Endothelial cell of umbilical vein (primary cell): ENCODE measurements at regions of chr1 and their contacts with region 1.

Region 1: DNA sequence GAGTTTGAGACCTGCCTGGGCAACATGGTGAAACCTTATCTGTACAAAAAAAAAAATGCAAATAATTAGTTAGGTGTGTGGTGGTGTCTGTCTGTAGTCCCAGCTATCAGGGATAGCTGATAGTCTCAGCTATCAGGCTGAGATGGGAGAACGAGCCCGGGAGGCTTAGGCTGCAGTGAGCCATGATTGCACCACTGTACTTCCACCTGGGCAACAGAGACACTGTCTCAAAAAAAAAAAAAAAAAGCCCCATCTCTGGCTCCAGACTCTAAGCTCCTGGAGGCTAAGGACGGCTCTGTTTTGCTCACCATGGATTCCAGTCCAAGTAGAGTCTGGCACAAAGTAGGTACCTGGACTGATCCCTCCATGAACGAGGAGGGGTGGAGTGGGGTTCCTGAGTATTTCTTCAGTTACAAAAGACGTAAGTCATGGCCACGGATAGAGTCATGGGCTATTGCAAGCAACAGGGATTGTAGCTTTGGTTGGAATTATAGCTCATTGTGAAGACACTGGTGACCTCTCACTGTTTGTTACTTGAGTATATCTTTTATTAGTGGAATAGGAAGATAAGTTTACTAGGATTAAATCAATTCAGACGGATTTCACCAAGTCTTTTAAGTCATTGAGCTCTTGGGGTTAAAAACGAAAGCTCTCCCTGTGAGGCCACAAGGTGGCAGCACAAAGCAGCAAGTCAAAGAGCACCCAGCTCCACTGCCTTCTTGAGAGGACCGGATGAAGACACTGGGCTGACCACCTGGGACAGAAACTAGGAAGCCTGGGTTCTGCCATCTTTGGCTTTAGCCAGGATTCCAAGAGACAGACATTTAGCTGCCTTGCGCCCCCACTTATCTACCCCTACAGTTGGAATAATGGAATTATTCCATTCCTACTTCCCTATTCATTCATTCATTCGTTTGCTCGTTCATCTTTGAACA is 35.6 kb upstream of the TMEM61 start:
- DNase-seq: peak; percentile 79
- H3K4me3 ChIP-seq: no peak overlapping the region
- H3K27ac ChIP-seq: no peak overlapping the region
- H3K4me1 ChIP-seq: peaks cover 4% of the 10 kb centered on the region
- H3K27me3 ChIP-seq: peaks cover 0 to 4% of the 10 kb centered on the region in 2 experiments
- CTCF ChIP-seq: peak; percentile 81 to 86
- POLR2A ChIP-seq: no peak

Region 2: DNA sequence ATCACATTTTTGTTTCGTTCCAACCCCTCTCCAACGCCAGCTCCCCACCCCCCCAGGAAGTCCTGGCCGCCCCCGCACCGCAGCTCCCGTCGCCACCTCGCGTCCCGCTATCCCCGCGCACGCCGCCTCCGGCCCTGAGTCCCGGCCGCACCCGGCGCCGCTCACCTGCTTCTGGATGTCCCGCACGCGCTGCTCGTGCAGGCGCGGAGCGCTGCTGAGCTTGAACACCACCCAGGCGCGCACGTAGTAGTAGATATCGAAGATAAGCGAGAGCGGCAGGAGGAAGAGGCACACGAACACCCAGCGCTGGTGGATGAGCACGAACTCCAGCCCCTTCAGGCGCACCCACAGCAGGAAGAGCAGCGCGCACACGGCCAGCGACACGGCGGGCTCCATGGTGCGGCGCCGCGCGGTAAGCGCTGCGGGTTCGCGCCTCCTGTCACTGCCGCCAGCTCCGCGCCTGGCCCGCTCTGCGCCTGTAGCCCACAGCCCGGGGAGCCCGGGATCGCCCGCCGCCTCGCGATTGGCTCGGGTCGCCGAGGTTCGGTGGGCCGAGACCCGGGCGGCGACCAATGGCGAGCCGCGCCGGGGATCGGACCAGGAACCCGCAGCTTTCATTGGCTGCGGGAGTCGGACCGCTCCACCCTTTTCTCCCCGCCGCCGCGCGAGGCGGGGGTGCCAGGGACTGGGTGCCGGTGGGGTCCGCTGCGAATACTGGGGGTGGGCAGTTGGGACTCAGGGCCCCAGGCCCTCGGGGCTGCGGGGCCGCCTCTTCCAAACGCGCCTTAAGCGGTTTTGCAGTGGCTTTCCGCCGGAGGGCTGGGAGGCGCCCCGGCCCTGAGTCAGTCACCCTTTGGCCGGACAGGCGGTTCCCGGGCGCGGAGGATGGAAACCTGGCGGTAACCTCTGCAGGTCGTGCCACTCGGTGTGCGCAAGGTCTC is 57.9 kb before region 1 on chr1 and contains the start of gene DHCR24:
- CTCF ChIA-PET with region 1: interaction called, 29 read pairs
- POLR2A ChIA-PET with region 1: no interaction called
- dilution Hi-C with region 1: no loop called
- intact Hi-C with region 1: loop called (anchors 2 kb)
- DNase-seq: peak; percentile 85
- H3K4me3 ChIP-seq: peak within 1 kb of the TSS; percentile 52 to 78 (median 56)
- H3K27ac ChIP-seq: peak within 1 kb of the TSS; percentile 25
- H3K4me1 ChIP-seq: peaks cover 32% of the 10 kb centered on the region
- H3K27me3 ChIP-seq: no peaks in the 10 kb centered on the region
- CTCF ChIP-seq: no peak
- POLR2A ChIP-seq: peak; percentile 77
- total RNA-seq, gene DHCR24: 223 and 229 TPM in 2 replicates

Region 3: DNA sequence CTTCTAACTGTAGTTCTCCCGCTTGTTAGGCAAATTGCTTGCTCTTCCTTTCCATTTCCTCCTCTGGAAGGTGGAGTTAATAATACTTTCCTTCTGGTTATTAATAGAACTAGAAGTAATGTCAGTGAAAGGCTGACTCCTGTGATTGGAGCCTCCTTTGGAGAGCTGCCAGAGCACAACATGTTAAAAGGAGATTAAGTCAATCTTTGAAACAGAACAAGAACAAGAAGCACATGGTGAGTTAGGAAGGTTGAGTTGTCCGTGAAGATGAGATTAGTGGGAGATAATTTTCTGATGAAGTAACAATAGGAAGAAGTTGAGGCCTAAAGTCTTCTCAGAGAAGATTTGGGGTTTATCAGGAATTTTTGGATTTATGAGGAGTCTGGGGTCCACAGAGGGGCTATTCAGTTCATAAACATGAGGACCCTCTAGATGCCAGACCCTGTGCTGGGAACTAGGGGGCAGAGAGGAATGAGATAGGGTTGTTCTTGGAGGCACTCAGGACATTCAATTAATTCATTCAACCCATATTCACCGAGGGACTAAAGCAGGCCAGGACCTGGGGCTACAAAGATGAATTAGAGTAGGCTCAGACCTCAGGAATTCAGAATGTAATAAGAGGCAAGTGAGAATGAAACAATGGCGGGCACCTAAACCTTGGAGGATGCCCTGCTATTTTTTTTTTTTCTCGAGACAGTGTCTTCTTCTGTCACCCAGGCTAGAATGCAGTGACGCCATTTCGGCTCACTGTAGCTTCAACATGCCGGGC is 17.2 kb before region 1 on chr1:
- CTCF ChIA-PET with region 1: interaction called, 14 read pairs
- POLR2A ChIA-PET with region 1: no interaction called
- dilution Hi-C with region 1: no loop called
- intact Hi-C with region 1: no loop called
- DNase-seq: peak; percentile 33
- H3K4me3 ChIP-seq: no peak overlapping the region
- H3K27ac ChIP-seq: no peak overlapping the region
- H3K4me1 ChIP-seq: no peaks in the 10 kb centered on the region
- H3K27me3 ChIP-seq: peaks cover 4 to 13% of the 10 kb centered on the region in 2 experiments
- CTCF ChIP-seq: no peak
- POLR2A ChIP-seq: no peak

Region 4: DNA sequence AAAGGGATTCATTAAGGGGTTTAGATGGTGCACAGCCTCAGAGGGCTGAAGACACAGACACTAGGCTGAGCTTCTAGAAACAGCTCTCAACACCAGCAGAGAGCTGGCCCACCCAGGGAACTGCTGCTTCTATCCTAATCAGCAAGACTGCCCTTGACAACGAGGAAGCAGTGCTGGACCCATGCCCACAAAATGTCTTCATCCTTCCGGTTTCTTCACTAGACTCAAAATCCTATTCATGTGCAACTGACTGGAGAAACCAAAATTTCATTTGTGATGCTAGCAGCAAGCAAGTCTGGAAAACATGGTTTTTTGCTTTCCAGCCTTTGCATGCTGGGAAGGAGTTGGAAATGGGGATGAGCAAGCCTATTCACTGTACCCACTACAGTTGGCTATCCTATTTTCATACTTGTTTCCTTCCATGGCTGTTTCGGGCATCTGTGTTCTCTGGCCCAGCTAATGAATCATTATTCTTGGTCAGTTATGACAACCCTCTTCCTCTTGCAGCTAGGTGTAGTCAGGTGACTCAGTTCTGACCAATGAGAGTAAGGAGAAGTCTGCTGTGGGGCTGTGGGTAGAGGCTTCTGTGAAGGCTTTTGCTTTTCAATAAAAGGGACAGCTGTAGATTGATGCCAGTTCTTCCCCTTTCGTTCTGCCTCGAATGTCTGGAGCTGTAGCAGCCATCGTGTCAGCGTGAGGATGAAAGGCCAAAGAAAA is 20.9 kb after region 1 on chr1:
- CTCF ChIA-PET with region 1: interaction called, 31 read pairs
- POLR2A ChIA-PET with region 1: no interaction called
- dilution Hi-C with region 1: no loop called
- intact Hi-C with region 1: no loop called
- DNase-seq: peak; percentile 18
- H3K4me3 ChIP-seq: no peak overlapping the region
- H3K27ac ChIP-seq: no peak overlapping the region
- H3K4me1 ChIP-seq: peaks cover 8% of the 10 kb centered on the region
- H3K27me3 ChIP-seq: no peaks in the 10 kb centered on the region
- CTCF ChIP-seq: no peak
- POLR2A ChIP-seq: no peak

Region 5: GRCh38 chr1:54996359-54996868 is 51.5 kb after region 1 on chr1:
- CTCF ChIA-PET with region 1: interaction called, 918 read pairs
- POLR2A ChIA-PET with region 1: no interaction called
- dilution Hi-C with region 1: no loop called
- intact Hi-C with region 1: loop called (anchors 1 kb)
- DNase-seq: peak; percentile 59
- H3K4me3 ChIP-seq: no peak overlapping the region
- H3K27ac ChIP-seq: no peak overlapping the region
- H3K4me1 ChIP-seq: peaks cover 3% of the 10 kb centered on the region
- H3K27me3 ChIP-seq: peaks cover 12 to 14% of the 10 kb centered on the region in 2 experiments
- CTCF ChIP-seq: peak; percentile 77 to 87
- POLR2A ChIP-seq: no peak

Region 6: DNA sequence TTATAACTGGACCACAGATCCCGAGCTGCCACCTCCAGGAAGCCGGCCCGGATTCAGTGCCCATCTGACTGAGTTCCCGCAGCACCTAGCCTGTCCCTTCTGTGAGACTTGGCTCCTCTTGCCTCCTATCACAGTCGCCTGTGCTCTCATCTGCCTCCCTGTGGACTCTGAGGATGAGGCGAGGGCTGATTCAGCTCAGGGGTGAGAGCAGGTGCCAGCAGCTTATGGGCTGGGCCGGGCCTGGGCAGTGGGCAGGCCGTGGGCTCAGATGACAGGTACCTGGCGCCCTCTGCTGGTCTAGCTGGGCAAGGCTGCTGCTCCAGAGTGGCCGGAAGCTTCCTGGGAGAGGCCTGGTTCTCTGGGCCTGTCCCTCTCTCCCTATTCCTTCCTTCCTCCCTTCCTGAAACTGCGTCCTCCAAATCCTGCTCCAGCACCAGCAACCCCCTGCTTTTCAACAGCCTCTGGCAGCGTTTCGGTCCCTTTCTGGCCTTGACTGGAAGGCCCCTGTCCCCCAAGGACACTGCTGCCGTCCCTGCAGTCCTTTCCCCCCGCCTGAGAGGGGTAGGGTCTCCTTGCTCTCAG is 77.2 kb after region 1 on chr1:
- CTCF ChIA-PET with region 1: interaction called, 587 read pairs
- POLR2A ChIA-PET with region 1: interaction called, 5 read pairs
- dilution Hi-C with region 1: no loop called
- intact Hi-C with region 1: loop called (anchors 1 kb)
- DNase-seq: peak; percentile 72
- H3K4me3 ChIP-seq: no peak overlapping the region
- H3K27ac ChIP-seq: no peak overlapping the region
- H3K4me1 ChIP-seq: no peaks in the 10 kb centered on the region
- H3K27me3 ChIP-seq: peaks cover 0 to 2% of the 10 kb centered on the region in 2 experiments
- CTCF ChIP-seq: peak; percentile 94 to 98
- POLR2A ChIP-seq: no peak